Naive thymus-derived CD4-positive, alpha-beta T cell (primary cell): ENCODE measurements at regions of chr11 and their contacts with region 1.

Region 1: GRCh38 chr11:124793466-124794278 is 6.5 kb downstream of the MSANTD2 start:
- DNase-seq: peak in 6 of 9 donors; percentile 5 to 50 (median 40)
- ATAC-seq: peak; percentile 84
- H3K4me3 ChIP-seq: no peak overlapping the region
- H3K4me3 Mint-ChIP-seq: no peak overlapping the region
- H3K27ac ChIP-seq: no peak overlapping the region
- H3K27ac Mint-ChIP-seq: peak overlapping the region in 1 of 9 donors; percentile 2
- H3K4me1 ChIP-seq: peaks cover 2 to 3% of the 10 kb centered on the region in 2 donors
- H3K4me1 Mint-ChIP-seq: peaks cover 17 to 45% (median 41%) of the 10 kb centered on the region in 7 donors
- H3K27me3 ChIP-seq: no peaks in the 10 kb centered on the region
- H3K27me3 Mint-ChIP-seq: no peaks in the 10 kb centered on the region

Region 2: GRCh38 chr11:124644426-124645280 is 149.0 kb before region 1 on chr11:
- CTCF ChIA-PET with region 1: interaction called, 4 read pairs
- POLR2A ChIA-PET with region 1: no interaction called
- intact Hi-C with region 1: loop called in 1 of 2 experiments (anchors 1 kb)
- DNase-seq: peak in 7 of 9 donors; percentile 6 to 28 (median 21)
- ATAC-seq: peak; percentile 88
- H3K4me3 ChIP-seq: no peak overlapping the region
- H3K4me3 Mint-ChIP-seq: no peak overlapping the region
- H3K27ac ChIP-seq: no peak overlapping the region
- H3K27ac Mint-ChIP-seq: no peak overlapping the region
- H3K4me1 ChIP-seq: no peaks in the 10 kb centered on the region
- H3K4me1 Mint-ChIP-seq: peaks cover 3 to 11% (median 5%) of the 10 kb centered on the region in 7 donors
- H3K27me3 ChIP-seq: no peaks in the 10 kb centered on the region
- H3K27me3 Mint-ChIP-seq: no peaks in the 10 kb centered on the region

Region 3: DNA sequence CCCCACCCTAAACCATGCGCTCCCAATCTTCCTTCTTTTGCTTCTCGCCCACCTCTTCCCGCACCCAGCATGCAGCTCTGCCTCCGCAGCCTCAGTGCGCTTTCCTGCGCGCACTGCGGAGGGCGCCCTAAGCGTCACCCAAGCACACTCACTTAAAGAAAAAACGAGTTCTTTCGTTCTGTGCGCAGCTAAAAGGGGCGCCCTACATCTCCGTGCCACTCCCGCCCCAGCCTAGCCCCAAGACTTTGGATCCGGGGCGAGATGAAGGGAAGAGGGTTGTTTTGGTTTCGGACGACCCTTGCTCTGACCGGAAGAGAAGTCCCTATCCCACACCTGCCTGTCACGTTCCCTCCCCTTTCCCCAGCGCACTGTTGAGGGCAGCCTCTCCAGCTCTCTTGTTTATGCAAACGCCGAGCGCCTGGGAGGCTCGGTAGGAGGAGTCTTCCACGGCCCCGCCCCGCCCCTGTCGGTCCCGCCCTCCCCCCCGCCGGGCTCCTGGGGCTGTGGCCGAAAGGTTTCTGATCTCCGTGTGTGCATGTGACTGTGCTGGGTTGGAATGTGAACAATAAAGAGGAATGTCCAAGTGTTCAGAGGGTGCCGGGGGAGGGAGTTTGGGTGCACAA is 46.9 kb before region 1 on chr11:
- CTCF ChIA-PET with region 1: interaction called, 8 read pairs
- POLR2A ChIA-PET with region 1: interaction called, 6 read pairs
- intact Hi-C with region 1: loop called in 1 of 2 experiments (anchors 1 kb)
- DNase-seq: peak; percentile 66 to 88 (median 85)
- ATAC-seq: peak; percentile 93
- H3K4me3 ChIP-seq: peak overlapping the region; percentile 99
- H3K4me3 Mint-ChIP-seq: peak overlapping the region; percentile 91 to 100 (median 98)
- H3K27ac ChIP-seq: peak overlapping the region; percentile 72
- H3K27ac Mint-ChIP-seq: peak overlapping the region; percentile 91 to 98 (median 96)
- H3K4me1 ChIP-seq: peaks cover 0 to 3% of the 10 kb centered on the region in 2 donors
- H3K4me1 Mint-ChIP-seq: peaks cover 4 to 37% (median 19%) of the 10 kb centered on the region in 7 donors
- H3K27me3 ChIP-seq: no peaks in the 10 kb centered on the region
- H3K27me3 Mint-ChIP-seq: peaks cover 0 to 22% (median 0%) of the 10 kb centered on the region in 5 donors

Region 4: DNA sequence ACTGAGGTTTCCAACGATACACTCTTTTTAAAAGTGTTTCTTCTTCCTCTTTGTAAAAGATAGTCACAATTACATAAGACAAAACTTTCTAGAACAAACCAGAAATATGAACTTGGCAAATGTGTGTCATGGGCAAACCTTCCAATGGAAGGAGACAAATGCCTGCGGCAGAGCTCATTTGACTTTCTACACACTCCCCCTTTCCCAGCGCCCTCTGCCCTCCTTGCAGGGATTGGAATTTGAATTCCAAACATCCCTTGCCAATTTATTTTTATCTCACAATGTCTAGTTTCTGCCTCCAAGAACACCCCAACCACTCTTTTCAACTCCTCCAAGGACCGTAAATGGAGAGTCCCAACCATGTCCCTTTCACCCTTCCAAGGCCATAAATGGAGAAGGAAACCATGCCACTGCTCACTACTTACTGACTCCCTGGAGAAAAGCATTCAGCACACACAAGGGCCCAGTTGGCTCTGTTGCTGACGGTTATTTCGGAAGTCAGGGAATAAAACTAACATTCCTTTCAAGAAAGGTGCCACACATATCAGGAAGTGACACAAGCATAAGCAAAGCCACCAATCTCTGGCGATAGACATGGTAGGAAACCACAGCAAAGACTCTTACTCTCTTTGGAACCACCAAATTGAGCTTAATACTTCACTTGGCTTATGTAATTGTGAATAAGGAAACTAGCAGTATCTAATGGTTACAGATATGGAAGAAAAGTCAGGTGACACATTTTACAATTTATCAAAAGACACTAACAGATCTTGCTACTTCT is 16.6 kb before region 1 on chr11:
- CTCF ChIA-PET with region 1: interaction called, 3 read pairs
- POLR2A ChIA-PET with region 1: interaction called, 3 read pairs
- intact Hi-C with region 1: loop called in 1 of 2 experiments (anchors 2 kb)
- DNase-seq: peak in 7 of 9 donors; percentile 11 to 64 (median 54)
- ATAC-seq: peak; percentile 78
- H3K4me3 ChIP-seq: no peak overlapping the region
- H3K4me3 Mint-ChIP-seq: peak overlapping the region in 8 of 10 donors; percentile 22 to 74 (median 50)
- H3K27ac ChIP-seq: no peak overlapping the region
- H3K27ac Mint-ChIP-seq: peak overlapping the region in 8 of 9 donors; percentile 27 to 93 (median 64)
- H3K4me1 ChIP-seq: peaks cover 0 to 15% of the 10 kb centered on the region in 2 donors
- H3K4me1 Mint-ChIP-seq: peaks cover 9 to 40% (median 33%) of the 10 kb centered on the region in 7 donors
- H3K27me3 ChIP-seq: no peaks in the 10 kb centered on the region
- H3K27me3 Mint-ChIP-seq: no peaks in the 10 kb centered on the region

Region 5: GRCh38 chr11:125154378-125155099 is 360.9 kb after region 1 on chr11:
- CTCF ChIA-PET with region 1: no interaction called
- POLR2A ChIA-PET with region 1: no interaction called
- intact Hi-C with region 1: no loop called
- DNase-seq: no peak
- ATAC-seq: no peak
- H3K4me3 ChIP-seq: no peak overlapping the region
- H3K4me3 Mint-ChIP-seq: no peak overlapping the region
- H3K27ac ChIP-seq: no peak overlapping the region
- H3K27ac Mint-ChIP-seq: no peak overlapping the region
- H3K4me1 ChIP-seq: no peaks in the 10 kb centered on the region
- H3K4me1 Mint-ChIP-seq: no peaks in the 10 kb centered on the region
- H3K27me3 ChIP-seq: peaks cover 0 to 4% of the 10 kb centered on the region in 2 donors
- H3K27me3 Mint-ChIP-seq: peaks cover 19 to 44% (median 35%) of the 10 kb centered on the region in 5 donors